ENCODE measurements at regions of chr15 and their contacts with region 1.

Region 1: DNA sequence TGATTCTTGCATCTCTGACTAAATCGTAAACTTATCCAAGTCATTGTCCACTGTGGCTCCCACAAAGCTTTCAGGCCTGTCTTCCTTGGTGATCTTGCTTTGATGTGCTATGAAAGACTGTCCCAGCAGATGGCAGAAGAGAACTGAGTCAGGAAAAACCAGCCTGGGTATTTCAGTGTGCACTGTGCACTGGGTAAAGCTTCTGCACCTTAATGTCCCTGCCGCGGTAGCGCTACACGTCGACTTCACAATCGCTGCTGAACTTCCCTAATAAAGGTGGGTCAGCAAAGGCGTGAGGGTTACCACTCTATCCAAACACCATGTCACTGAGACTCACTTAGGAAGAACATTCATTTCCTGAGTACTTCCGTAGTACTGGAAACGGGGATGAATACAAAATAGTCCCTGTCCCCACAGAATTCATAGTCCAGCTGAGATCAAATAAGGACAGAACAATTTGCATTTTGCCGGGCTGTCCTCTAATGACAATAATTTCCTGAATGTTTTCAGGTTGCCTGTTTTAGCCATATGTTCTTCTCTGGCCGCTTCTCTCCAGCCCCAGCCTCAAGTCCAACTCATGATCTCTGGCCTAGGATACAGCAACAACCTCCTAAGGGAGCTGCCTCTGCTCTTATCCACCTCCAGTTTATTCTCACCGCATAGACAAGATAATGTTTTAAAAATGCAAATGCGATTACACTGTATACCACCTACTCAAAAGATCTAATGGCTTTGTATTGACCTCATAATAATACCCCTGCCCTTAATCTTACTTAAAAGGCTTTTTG is 83.6 kb upstream of the AKAP13 start:
- H3K4me3 Mint-ChIP-seq: peak overlapping the region; percentile 58
- H3K27ac Mint-ChIP-seq: no peak overlapping the region
- H3K4me1 Mint-ChIP-seq: peaks cover 16% of the 10 kb centered on the region
- H3K27me3 Mint-ChIP-seq: no peaks in the 10 kb centered on the region

Region 2: DNA sequence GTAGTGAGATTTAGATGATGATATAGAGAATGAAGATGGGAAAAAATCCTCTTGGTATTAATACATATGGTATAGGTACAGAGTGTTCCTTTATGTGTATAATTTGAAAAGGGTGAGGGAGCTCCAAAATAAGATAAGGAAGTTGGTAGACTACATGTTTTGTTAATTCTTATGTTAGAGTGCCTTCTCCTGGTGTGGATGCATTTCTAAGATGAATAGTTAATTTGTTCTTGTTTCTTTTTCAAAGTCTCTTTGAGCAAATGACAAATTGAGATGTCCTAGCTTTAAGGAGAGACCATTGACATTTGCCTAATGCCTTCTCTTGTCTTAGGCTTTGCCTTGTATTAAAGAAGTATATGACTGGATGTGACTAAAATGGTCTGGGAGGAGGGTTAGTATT is 117.7 kb after region 1 on chr15:
- intact Hi-C with region 1: loop called (anchors 1 kb)
- H3K4me3 Mint-ChIP-seq: no peak overlapping the region
- H3K27ac Mint-ChIP-seq: no peak overlapping the region
- H3K4me1 Mint-ChIP-seq: peaks cover 20% of the 10 kb centered on the region
- H3K27me3 Mint-ChIP-seq: no peaks in the 10 kb centered on the region

Region 3: DNA sequence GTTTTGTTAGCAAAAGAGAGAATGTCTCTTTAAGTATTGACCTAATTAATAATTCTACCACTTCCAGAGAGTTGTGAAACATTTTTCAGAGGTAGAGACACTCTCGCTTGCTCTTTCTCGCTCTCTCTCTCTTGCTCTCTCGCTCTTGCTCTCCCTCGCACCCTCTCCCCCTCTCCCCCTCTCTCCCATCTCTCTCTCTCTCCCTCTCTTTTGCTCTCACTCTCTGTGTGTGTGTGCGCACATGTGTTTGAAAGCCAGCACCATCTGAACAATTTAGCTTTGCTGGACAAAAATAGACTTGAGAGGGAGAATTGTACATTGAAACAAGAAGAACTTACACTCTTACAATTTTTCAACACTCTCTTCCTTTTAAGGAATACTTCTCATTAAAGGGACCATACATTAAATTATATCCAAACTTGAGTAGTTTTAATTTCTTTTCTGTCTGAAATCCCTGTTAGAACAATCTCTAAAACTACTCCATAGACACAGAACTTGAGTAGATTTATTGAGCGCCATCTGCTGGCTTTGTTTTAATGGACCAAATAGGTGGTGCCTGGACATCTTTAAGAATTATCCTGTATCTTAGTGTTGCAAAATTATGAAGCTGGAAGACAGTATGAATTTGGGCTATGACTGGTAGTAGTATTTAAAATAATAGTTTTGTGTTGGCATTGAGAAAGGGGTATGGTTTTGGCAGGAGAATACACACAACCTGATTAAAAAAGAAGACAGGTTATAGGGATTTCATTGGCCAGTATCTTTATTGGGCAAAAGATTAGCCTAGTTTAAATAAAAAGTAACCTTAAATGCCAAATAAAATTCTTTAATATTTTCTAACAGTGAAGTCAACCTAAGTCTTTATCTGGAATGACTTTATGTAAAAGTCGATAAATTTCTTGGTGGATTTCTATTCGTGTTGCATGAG is 208.2 kb after region 1 on chr15:
- intact Hi-C with region 1: loop called (anchors 10 kb)
- H3K4me3 Mint-ChIP-seq: no peak overlapping the region
- H3K27ac Mint-ChIP-seq: peak overlapping the region; percentile 15
- H3K4me1 Mint-ChIP-seq: peaks cover 41% of the 10 kb centered on the region
- H3K27me3 Mint-ChIP-seq: no peaks in the 10 kb centered on the region